Activated T-helper 1 cell treated with anti-CD3 and anti-CD28 coated beads, Interleukin-12 subunit alpha, Interleukin-12 subunit beta, Interleukin-2, Interleukin-4 antibody, amounts not matched to agents 30 ng/mL and 10 ng/mL and 1 ng/mL, durations not matched to agents 14 hours and 24 hours and 36 hours (primary cell): ENCODE measurements at regions of chr3 and their contacts with region 1.

Region 1: DNA sequence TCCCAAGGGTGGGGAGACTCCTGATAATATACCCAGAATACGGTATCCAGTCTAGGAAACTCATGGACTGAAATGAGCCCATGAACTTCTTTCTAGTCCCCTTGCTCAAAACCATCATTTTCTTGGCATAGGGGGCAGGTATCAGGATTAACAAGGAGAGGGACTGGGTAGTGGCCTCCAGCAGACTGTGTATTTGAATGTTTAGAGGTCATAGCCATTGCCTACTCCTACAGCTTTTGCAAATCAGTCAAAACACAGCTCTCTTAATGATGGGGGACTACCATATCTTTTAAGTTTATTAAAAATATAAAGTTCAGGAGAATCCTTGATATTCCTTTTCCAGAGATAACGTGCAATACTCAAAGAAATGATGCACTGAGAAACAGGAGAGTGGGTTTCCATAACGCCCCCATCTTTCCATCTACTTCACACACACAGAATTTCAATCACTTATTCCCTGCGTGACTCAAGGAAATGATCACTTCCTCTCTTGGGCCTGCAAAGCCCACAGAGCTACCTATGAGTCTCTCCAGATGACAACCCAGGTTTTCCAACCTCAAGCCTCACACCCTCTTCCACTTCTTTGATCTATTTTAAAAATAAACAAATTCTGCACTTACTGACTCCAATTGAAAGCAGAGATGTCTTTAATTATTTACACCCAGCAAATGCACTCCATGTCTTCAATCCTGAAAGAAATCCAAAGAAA is 584.0 kb upstream of the LMCD1 start:
- DNase-seq: no peak
- H3K4me3 Mint-ChIP-seq: no peak overlapping the region
- H3K27ac Mint-ChIP-seq: no peak overlapping the region
- H3K4me1 Mint-ChIP-seq: no peaks in the 10 kb centered on the region
- H3K27me3 Mint-ChIP-seq: no peaks in the 10 kb centered on the region

Region 2: DNA sequence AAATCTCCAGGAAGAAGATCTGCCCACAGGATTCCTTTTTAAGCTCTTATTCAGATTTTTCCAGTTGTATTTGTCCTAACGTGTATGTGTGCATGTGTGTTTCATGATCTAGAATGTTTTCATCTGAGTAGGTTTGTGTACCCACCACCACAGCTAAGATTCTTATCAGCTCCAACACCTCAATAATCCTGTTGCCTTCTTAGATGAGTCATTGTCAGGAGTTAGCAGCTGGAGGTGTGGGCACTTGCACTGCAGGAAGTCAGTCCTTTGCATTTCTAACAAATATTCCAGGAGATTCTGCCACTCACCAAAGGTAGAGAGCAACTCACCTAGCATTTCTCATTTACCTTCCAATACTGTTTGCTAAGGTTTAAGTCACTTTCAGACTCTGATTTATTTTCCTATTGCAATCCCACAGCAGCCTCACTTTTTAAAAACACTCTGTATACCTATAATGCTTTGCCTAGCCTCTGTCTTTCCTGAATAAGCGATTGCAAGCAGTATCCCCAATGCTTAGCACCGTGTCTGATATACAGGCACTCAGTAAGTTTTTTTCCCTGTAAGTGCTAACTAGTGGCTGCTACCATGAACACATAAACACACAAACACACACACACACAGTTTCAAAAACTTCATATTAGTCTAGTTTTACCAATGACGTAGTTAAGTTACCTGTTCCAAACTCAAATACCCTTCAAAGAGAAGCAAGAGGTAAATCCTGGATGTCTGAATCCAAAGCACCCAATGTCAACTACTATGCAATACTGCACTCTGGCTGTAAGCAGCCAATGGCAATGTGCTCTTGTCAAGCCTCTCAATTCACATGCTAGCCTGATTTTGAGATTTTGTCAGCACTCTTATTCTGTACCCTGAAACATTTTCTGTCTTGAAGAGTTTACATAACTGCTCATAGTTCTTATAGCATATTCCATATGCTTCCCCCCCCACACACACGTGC is 129.4 kb before region 1 on chr3:
- intact Hi-C with region 1: no loop called
- DNase-seq: no peak
- H3K4me3 Mint-ChIP-seq: no peak overlapping the region
- H3K27ac Mint-ChIP-seq: no peak overlapping the region
- H3K4me1 Mint-ChIP-seq: no peaks in the 10 kb centered on the region
- H3K27me3 Mint-ChIP-seq: no peaks in the 10 kb centered on the region

Region 3: GRCh38 chr3:7879572-7879971 is 38.0 kb before region 1 on chr3:
- intact Hi-C with region 1: loop called (anchors 1 kb)
- DNase-seq: no peak
- H3K4me3 Mint-ChIP-seq: no peak overlapping the region
- H3K27ac Mint-ChIP-seq: no peak overlapping the region
- H3K4me1 Mint-ChIP-seq: peaks cover 18% of the 10 kb centered on the region
- H3K27me3 Mint-ChIP-seq: no peaks in the 10 kb centered on the region